Right ventricle myocardium inferior (tissue), 1 donor: ENCODE measurements at regions of chr6 and their contacts with region 1.

Region 1: GRCh38 chr6:125153391-125154117 is at the start of gene TPD52L1:
- DNase-seq: peak; percentile 90
- ATAC-seq: peak; percentile 96
- total RNA-seq, gene TPD52L1: 56.2 TPM

Region 2: GRCh38 chr6:124694139-124694782 is 459.3 kb before region 1 on chr6:
- intact Hi-C with region 1: no loop called
- DNase-seq: no peak
- ATAC-seq: no peak

Region 3: GRCh38 chr6:125197795-125198269 is 44.3 kb after region 1 on chr6:
- intact Hi-C with region 1: loop called (anchors 5 kb)
- DNase-seq: no peak
- ATAC-seq: peak; percentile 96

Region 4: DNA sequence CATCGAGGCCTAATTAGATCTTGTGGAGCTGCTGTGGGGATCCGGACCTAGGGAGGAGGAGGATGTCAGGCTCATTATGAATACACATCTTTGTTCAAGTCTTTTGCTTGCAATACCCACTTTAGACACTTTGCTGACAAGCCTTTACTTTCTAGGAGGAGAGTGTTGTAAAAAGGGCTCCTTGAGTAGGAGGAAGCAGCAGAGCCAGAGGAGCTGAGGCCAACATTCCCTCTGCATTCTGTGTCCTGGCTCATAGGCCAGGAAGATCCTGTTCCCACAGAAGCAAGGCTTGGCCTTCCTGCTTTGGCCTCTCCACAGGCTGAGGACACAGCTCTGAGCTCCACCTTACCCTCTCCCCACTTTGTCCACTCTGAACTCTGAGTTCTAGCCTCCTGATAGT is 67.2 kb after region 1 on chr6:
- intact Hi-C with region 1: loop called (anchors 10 kb)
- DNase-seq: no peak
- ATAC-seq: peak; percentile 94

Region 5: GRCh38 chr6:125301435-125302391 is 148.2 kb after region 1 on chr6 and contains the start of gene HDDC2:
- intact Hi-C with region 1: loop called (anchors 1 kb)
- DNase-seq: peak; percentile 92
- ATAC-seq: peak; percentile 90
- total RNA-seq, gene HDDC2: 91.6 TPM